ENCODE measurements at regions of chrX and their contacts with region 1.

Region 1: DNA sequence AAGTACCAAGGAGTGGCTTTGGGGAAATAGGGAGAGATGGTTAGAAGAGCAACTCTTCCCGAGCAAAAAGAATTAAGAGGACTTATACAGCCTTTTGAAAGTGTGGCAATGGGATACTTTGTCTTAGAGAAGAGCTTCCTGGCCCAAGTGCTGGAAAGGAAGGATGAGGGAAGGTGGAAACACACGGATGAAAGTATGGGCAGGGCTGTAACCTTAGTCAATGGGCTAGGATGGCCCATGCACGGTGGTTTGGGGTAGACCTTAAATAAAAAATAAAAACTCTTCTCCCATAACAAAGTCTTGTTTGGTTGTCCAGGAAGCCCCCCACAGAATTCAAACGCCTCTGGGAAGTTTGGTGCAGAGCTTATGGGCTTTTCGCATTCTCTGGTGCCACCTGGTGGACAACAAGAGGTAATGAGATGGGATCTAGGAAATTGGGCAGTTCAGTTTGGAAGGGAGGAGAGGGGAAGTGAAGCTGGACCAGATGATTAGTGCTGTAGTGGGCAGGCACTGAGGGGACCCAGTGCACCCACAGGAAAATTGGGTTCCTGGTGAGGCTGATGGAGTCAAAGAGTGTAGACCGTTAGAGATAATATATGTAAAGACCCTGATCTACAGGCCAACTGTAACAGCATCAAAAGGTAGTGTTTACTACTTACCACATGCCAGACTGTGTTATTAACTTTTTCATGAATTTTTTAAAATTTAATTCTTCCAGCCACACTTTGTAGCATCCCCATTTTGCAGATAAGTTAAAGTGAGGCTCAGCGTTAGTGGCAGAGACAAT is 13.8 kb upstream of the ENOX2 start:
- DNase-seq: no peak
- H3K4me3 Mint-ChIP-seq: no peak overlapping the region
- H3K27ac Mint-ChIP-seq: no peak overlapping the region
- H3K4me1 Mint-ChIP-seq: no peaks in the 10 kb centered on the region
- H3K27me3 Mint-ChIP-seq: peaks cover 2% of the 10 kb centered on the region

Region 2: DNA sequence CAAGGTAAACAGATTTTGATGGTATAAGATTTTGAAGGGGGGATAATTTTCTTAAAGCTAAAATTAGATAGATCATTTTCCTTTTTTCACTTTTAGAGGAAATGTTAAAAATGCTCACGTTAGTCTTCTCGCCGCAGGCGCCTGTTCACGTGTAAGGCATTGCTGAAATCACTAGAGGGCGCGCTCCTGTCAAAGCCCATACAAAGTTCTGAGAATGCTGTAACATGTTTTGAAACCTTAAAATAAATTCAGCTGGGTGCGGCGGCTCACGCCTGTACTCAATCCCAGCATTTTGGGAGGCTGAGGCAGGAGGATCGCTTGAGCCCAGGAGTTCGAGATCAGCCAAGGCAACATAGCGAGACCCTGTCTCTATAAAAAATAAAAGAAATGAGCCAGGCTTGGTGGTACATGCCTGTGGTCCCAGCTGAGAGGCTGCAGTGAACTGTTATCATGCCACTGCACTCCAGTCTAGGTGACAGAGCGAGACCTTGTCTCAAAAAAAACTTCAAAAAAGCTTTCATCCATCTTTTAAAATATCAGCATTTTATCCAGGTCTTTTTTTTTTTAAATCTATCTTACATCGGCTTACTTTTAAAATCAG is 377.0 kb before region 1 on chrX:
- intact Hi-C with region 1: loop called (anchors 1 kb)
- DNase-seq: peak; percentile 13
- H3K4me3 Mint-ChIP-seq: no peak overlapping the region
- H3K27ac Mint-ChIP-seq: no peak overlapping the region
- H3K4me1 Mint-ChIP-seq: no peaks in the 10 kb centered on the region
- H3K27me3 Mint-ChIP-seq: no peaks in the 10 kb centered on the region

Region 3: DNA sequence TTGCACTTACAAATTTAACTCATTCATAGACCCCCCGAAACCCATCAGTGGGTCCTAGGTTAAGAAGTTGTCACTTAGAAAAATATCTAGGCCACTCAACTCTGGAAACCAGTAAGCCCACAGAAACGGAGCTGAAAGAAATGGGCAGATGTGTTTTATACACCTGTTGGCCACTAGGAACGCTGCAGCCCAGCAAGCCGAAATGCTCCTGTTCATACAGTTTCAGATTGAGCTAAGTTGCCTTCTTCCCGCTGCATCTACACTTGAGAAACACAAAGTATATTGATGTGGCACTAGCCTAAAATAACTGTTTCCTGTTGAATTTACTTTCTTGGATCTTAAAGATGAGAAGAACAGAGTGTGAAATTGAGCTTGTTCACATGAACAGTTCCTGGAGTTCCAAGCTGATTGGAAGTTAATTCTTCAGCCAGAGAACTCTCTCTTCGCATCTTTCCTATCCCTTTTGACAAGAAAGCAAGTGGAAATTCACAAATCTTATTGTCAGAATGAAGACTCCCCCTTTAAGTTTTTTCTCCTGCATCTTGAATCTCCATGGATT is 340.9 kb before region 1 on chrX:
- intact Hi-C with region 1: loop called (anchors 5 kb)
- DNase-seq: no peak
- H3K4me3 Mint-ChIP-seq: no peak overlapping the region
- H3K27ac Mint-ChIP-seq: no peak overlapping the region
- H3K4me1 Mint-ChIP-seq: peaks cover 2% of the 10 kb centered on the region
- H3K27me3 Mint-ChIP-seq: peaks cover 3% of the 10 kb centered on the region